Endothelial cell of umbilical vein (primary cell): ENCODE measurements at regions of chr14 and their contacts with region 1.

Region 1: GRCh38 chr14:25049568-25050268 is at the start of gene STXBP6:
- DNase-seq: peak; percentile 39
- H3K4me3 ChIP-seq: peak within 1 kb of the TSS; percentile 30 to 42 (median 34)
- H3K27ac ChIP-seq: no peak within 1 kb of the TSS
- H3K4me1 ChIP-seq: no peaks in the 10 kb centered on the region
- H3K27me3 ChIP-seq: peaks cover 42 to 51% of the 10 kb centered on the region in 2 experiments
- CTCF ChIP-seq: no peak
- POLR2A ChIP-seq: no peak
- total RNA-seq, gene STXBP6: not detected in 2 replicates

Region 2: GRCh38 chr14:25090716-25091454 is 41.2 kb after region 1 on chr14:
- CTCF ChIA-PET with region 1: no interaction called
- POLR2A ChIA-PET with region 1: no interaction called
- dilution Hi-C with region 1: no loop called
- intact Hi-C with region 1: loop called (anchors 1 kb)
- DNase-seq: no peak
- H3K4me3 ChIP-seq: no peak overlapping the region
- H3K27ac ChIP-seq: no peak overlapping the region
- H3K4me1 ChIP-seq: no peaks in the 10 kb centered on the region
- H3K27me3 ChIP-seq: no peaks in the 10 kb centered on the region
- CTCF ChIP-seq: no peak
- POLR2A ChIP-seq: no peak